ENCODE measurements at regions of chrX and their contacts with region 1.

Region 1: DNA sequence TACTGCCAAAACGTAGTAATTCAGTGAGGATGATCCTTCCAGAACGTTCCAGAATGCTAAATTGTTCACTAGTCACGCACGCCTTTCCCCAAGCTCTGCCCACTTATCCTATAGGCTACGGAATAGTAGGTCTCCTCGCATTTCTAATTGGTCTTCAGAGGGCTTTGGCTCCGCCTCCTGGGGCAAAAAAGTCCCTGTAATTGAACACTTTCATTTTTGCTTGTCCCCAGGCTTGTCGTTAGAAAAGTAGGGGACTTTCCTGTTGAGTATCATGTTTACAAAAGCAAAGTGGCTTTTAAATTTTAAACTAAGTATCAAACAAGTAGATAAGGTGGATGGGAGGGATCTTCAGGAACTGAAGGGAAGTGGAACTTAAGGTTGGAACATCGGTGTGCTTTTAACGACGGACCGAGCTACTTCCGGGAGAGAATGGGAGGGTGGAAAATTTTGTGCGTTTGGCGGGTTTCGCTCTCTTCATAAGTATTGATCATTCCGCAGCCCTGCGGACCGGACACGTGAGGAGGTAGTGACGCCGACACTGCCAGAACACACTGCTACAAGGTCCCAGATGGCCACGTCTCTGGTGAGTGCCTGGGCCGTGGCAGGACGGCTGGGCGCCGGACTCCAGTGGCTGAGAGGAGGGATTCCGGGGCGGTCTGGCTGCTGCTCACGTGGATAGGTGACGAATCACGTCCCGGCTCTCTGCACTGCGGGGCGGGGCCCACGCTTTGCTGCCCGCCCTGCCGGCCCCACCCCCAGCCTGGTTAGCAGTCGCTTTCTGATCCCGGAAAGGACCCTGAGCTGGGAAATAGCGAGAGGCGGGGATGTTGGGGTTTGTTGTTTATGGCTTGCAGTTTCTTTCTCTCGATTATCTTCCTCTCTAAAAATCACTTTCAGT is at the start of gene NXT2:
- DNase-seq: peak; percentile 79 to 92
- ATAC-seq: peak; percentile 97 to 100 (median 98)
- H3K4me3 ChIP-seq: peak within 1 kb of the TSS; percentile 79
- H3K4me3 Mint-ChIP-seq: peak within 1 kb of the TSS; percentile 98
- H3K27ac ChIP-seq: peak within 1 kb of the TSS; percentile 92
- H3K27ac Mint-ChIP-seq: peak within 1 kb of the TSS; percentile 95 to 98
- H3K4me1 ChIP-seq: peaks cover 2% of the 10 kb centered on the region
- H3K4me1 Mint-ChIP-seq: peaks cover 34% of the 10 kb centered on the region in 2 donors
- H3K27me3 ChIP-seq: no peaks in the 10 kb centered on the region
- H3K27me3 Mint-ChIP-seq: no peaks in the 10 kb centered on the region
- CTCF ChIP-seq: no peak
- total RNA-seq, gene NXT2: 12.0 to 21.6 (median 12.5) TPM

Region 2: GRCh38 chrX:108584617-108585211 is 952.0 kb before region 1 on chrX:
- intact Hi-C with region 1: no loop called
- DNase-seq: no peak
- ATAC-seq: no peak
- H3K4me3 ChIP-seq: no peak overlapping the region
- H3K4me3 Mint-ChIP-seq: no peak overlapping the region
- H3K27ac ChIP-seq: no peak overlapping the region
- H3K27ac Mint-ChIP-seq: no peak overlapping the region
- H3K4me1 ChIP-seq: no peaks in the 10 kb centered on the region
- H3K4me1 Mint-ChIP-seq: no peaks in the 10 kb centered on the region
- H3K27me3 ChIP-seq: no peaks in the 10 kb centered on the region
- H3K27me3 Mint-ChIP-seq: peaks cover 0 to 6% of the 10 kb centered on the region in 2 donors
- CTCF ChIP-seq: no peak

Region 3: GRCh38 chrX:109440475-109440874 is 96.2 kb before region 1 on chrX:
- intact Hi-C with region 1: no loop called
- DNase-seq: no peak
- ATAC-seq: no peak
- H3K4me3 ChIP-seq: no peak overlapping the region
- H3K4me3 Mint-ChIP-seq: no peak overlapping the region
- H3K27ac ChIP-seq: no peak overlapping the region
- H3K27ac Mint-ChIP-seq: no peak overlapping the region
- H3K4me1 ChIP-seq: no peaks in the 10 kb centered on the region
- H3K4me1 Mint-ChIP-seq: no peaks in the 10 kb centered on the region
- H3K27me3 ChIP-seq: no peaks in the 10 kb centered on the region
- H3K27me3 Mint-ChIP-seq: peaks cover under 1 to 23% of the 10 kb centered on the region in 2 donors
- CTCF ChIP-seq: no peak

Region 4: GRCh38 chrX:109732780-109733657 is 196.3 kb after region 1 on chrX and contains the start of gene ACSL4:
- intact Hi-C with region 1: loop called (anchors 2 kb)
- DNase-seq: peak; percentile 81 to 90
- ATAC-seq: peak; percentile 93 to 99 (median 98)
- H3K4me3 ChIP-seq: peak within 1 kb of the TSS; percentile 97
- H3K4me3 Mint-ChIP-seq: peak within 1 kb of the TSS; percentile 93
- H3K27ac ChIP-seq: peak within 1 kb of the TSS; percentile 91
- H3K27ac Mint-ChIP-seq: peak within 1 kb of the TSS; percentile 87 to 96
- H3K4me1 ChIP-seq: no peaks in the 10 kb centered on the region
- H3K4me1 Mint-ChIP-seq: peaks cover 22 to 36% of the 10 kb centered on the region in 2 donors
- H3K27me3 ChIP-seq: no peaks in the 10 kb centered on the region
- H3K27me3 Mint-ChIP-seq: peaks cover 0 to 10% of the 10 kb centered on the region in 2 donors
- CTCF ChIP-seq: no peak
- total RNA-seq, gene ACSL4: 19.8 to 28.4 (median 21.7) TPM

Region 5: DNA sequence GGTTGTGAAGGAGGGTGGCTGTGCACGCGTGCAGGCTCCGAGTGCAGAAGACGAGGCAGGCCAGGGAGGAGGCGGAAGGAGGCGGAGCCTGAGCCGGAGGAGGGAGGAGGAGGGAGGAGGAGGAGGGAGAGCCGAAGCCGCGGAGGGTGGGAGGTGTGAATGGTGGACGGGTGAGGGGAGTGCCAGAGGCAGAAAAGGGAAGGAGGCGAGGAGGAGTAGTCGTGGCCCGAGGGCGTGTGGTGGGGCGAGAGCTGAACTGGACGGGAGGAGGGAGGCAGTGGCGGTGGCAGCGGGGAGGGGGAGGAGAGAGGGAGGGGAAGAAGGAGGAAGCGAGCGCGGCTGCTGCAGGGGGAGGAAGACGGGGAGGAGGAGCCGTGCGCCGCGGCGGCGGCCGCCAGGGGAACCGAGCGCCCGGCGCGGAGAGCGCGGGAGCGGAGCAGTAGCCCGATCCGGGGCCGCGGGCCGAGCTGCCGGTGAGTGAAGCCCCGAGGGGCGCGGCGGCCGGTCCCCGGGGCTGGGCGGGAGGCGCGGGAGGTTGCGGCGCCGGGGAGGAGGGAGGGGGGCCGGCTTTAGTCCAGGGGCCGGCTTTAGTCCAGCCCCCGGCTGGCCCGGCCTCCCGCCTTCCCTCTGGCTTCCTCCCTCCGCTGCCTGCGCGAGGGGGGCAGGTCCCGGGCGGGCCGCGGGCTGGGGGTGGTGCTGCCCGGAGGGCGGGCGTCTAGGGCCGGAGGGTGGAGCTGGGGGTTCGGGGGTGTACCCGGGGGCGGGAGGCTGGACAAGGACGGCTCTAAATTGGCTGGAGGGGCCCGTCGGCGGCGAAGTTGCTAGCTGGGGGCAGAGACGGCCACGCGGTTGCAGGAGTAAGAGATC is 465.8 kb after region 1 on chrX and contains the start of gene TMEM164:
- intact Hi-C with region 1: loop called (anchors 10 kb)
- DNase-seq: peak; percentile 65 to 87
- ATAC-seq: peak; percentile 77 to 93 (median 82)
- H3K4me3 ChIP-seq: peak within 1 kb of the TSS; percentile 80
- H3K4me3 Mint-ChIP-seq: peak within 1 kb of the TSS; percentile 95
- H3K27ac ChIP-seq: peak within 1 kb of the TSS; percentile 52
- H3K27ac Mint-ChIP-seq: peak within 1 kb of the TSS; percentile 80 to 92
- H3K4me1 ChIP-seq: peaks cover 25% of the 10 kb centered on the region
- H3K4me1 Mint-ChIP-seq: peaks cover 22 to 33% of the 10 kb centered on the region in 2 donors
- H3K27me3 ChIP-seq: no peaks in the 10 kb centered on the region
- H3K27me3 Mint-ChIP-seq: no peaks in the 10 kb centered on the region
- CTCF ChIP-seq: no peak
- total RNA-seq, gene TMEM164: 18.9 to 80.6 (median 30.6) TPM